CD4-positive, alpha-beta memory T cell (primary cell): ENCODE measurements at regions of chr17 and their contacts with region 1.

Region 1: DNA sequence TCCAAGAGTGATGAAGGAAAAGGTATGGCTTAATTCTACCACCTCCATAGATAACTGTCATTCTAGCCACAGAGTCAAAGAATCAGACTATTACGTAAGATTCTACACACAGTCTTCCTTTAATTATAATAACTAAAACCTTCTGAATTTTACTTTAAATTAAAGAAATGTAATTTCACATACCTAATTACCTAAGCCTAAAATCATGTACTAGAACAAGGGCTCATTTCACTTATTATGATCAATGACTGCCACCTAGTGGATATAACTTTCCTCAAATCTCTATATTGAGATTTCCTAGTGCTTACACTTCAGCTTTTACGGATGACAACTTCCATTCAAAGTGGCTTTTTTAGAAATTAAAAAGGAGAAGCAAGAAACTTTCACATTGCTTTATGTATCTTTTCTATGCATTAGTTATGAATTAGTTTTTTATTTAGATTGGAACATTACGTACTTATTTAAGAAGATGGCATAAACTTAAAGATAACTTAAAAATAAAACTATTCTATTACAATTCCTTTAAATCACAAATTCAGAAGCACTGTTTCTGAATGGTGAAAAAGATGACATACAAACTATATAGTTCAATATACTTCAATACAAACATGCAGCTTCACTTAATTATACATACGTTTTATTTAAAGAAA is 18.2 kb upstream of the ABCA10 start:
- DNase-seq: peak in 3 of 5 donors; percentile 17 to 32 (median 28)
- H3K4me3 ChIP-seq: no peak overlapping the region
- H3K4me3 Mint-ChIP-seq: no peak overlapping the region
- H3K27ac ChIP-seq: no peak overlapping the region
- H3K27ac Mint-ChIP-seq: no peak overlapping the region
- H3K4me1 ChIP-seq: no peaks in the 10 kb centered on the region
- H3K4me1 Mint-ChIP-seq: no peaks in the 10 kb centered on the region
- H3K27me3 ChIP-seq: no peaks in the 10 kb centered on the region
- H3K27me3 Mint-ChIP-seq: no peaks in the 10 kb centered on the region

Region 2: DNA sequence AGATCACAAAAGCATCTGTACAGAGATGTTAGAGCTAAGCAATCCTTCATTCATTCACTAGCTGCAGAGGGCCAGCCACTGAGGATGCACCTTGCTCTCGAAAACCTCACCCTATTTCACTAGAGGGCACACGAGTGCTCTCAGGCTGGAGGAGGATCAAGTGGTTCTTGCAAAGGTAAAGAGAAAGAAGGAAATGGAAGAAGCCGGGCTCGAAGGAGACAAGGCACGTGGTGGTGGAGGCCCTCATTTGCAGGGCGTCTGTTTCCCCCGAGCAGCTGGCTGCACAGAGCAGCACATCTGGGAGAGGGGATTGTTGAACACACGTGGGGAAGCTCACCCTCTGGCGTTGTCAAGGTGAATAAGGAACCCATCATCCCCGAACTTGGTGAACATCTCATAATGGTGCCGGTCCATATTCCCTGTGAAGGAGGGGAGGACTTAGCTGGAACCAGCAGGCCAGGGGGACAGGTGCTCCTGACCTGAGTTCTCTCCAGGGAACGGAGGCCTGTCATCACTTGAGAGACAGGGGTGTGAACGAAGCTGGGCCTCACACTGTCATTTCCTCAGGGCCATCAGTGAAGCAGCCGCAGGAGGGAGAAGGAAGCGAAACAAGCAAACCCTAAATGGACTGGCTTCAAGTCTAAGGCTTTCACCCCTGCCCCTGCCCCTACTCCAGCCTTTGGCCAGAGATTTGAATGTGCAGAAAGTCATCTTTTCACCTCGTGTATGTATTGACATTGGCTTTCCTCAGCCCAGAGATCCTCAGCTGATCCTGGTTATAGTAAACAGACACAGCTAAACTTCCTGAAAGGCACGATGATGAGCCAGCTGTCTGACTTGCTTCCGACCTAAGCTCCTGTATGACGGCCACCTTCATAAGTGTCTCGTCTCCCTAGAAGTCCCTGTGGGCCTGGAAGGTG is 707.0 kb before region 1 on chr17:
- CTCF ChIA-PET with region 1: no interaction called
- POLR2A ChIA-PET with region 1: no interaction called
- intact Hi-C with region 1: loop called (anchors 10 kb)
- DNase-seq: no peak
- H3K4me3 ChIP-seq: no peak overlapping the region
- H3K4me3 Mint-ChIP-seq: no peak overlapping the region
- H3K27ac ChIP-seq: no peak overlapping the region
- H3K27ac Mint-ChIP-seq: peak overlapping the region in 1 of 7 donors; percentile 14
- H3K4me1 ChIP-seq: no peaks in the 10 kb centered on the region
- H3K4me1 Mint-ChIP-seq: no peaks in the 10 kb centered on the region
- H3K27me3 ChIP-seq: no peaks in the 10 kb centered on the region
- H3K27me3 Mint-ChIP-seq: no peaks in the 10 kb centered on the region

Region 3: GRCh38 chr17:68771867-68772515 is 474.9 kb before region 1 on chr17:
- CTCF ChIA-PET with region 1: interaction called, 37 read pairs
- POLR2A ChIA-PET with region 1: no interaction called
- intact Hi-C with region 1: no loop called
- DNase-seq: peak in 2 of 5 donors; percentile 3 to 4
- H3K4me3 ChIP-seq: no peak overlapping the region
- H3K4me3 Mint-ChIP-seq: peak overlapping the region in 5 of 8 donors; percentile 19 to 71 (median 43)
- H3K27ac ChIP-seq: no peak overlapping the region
- H3K27ac Mint-ChIP-seq: no peak overlapping the region
- H3K4me1 ChIP-seq: no peaks in the 10 kb centered on the region
- H3K4me1 Mint-ChIP-seq: peaks cover 0 to 3% (median 0%) of the 10 kb centered on the region in 4 donors
- H3K27me3 ChIP-seq: no peaks in the 10 kb centered on the region
- H3K27me3 Mint-ChIP-seq: peaks cover 3 to 4% of the 10 kb centered on the region in 2 donors

Region 4: GRCh38 chr17:68777243-68777855 is 469.5 kb before region 1 on chr17:
- CTCF ChIA-PET with region 1: interaction called, 37 read pairs
- POLR2A ChIA-PET with region 1: no interaction called
- intact Hi-C with region 1: no loop called
- DNase-seq: peak in 4 of 5 donors; percentile 13 to 27 (median 24)
- H3K4me3 ChIP-seq: no peak overlapping the region
- H3K4me3 Mint-ChIP-seq: no peak overlapping the region
- H3K27ac ChIP-seq: no peak overlapping the region
- H3K27ac Mint-ChIP-seq: no peak overlapping the region
- H3K4me1 ChIP-seq: no peaks in the 10 kb centered on the region
- H3K4me1 Mint-ChIP-seq: no peaks in the 10 kb centered on the region
- H3K27me3 ChIP-seq: no peaks in the 10 kb centered on the region
- H3K27me3 Mint-ChIP-seq: peaks cover 4 to 13% of the 10 kb centered on the region in 2 donors

Region 5: GRCh38 chr17:69198238-69198637 is 48.6 kb before region 1 on chr17:
- CTCF ChIA-PET with region 1: no interaction called
- POLR2A ChIA-PET with region 1: no interaction called
- intact Hi-C with region 1: no loop called
- DNase-seq: no peak
- H3K4me3 ChIP-seq: no peak overlapping the region
- H3K4me3 Mint-ChIP-seq: no peak overlapping the region
- H3K27ac ChIP-seq: no peak overlapping the region
- H3K27ac Mint-ChIP-seq: no peak overlapping the region
- H3K4me1 ChIP-seq: no peaks in the 10 kb centered on the region
- H3K4me1 Mint-ChIP-seq: no peaks in the 10 kb centered on the region
- H3K27me3 ChIP-seq: no peaks in the 10 kb centered on the region
- H3K27me3 Mint-ChIP-seq: no peaks in the 10 kb centered on the region

Region 6: DNA sequence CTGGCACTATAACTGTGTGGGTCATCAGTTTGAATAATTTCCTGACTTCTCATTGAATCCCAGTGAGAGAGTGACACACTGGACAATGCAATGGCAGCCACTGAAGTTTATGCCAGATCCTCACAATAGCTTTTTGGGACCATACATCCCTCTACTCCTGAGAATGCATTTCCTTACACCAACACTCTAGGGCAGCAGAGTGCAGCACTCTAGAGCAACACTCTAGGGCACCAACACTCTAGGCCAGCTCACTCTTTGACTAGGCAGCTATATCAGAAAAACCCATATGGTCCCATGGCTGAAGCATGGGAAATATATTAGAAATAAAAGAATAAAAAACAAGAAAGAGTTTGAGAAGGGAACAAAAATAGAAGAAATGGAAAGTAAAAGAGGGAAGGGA is 476.9 kb after region 1 on chr17:
- CTCF ChIA-PET with region 1: no interaction called
- POLR2A ChIA-PET with region 1: no interaction called
- intact Hi-C with region 1: no loop called
- DNase-seq: no peak
- H3K4me3 ChIP-seq: no peak overlapping the region
- H3K4me3 Mint-ChIP-seq: no peak overlapping the region
- H3K27ac ChIP-seq: no peak overlapping the region
- H3K27ac Mint-ChIP-seq: no peak overlapping the region
- H3K4me1 ChIP-seq: no peaks in the 10 kb centered on the region
- H3K4me1 Mint-ChIP-seq: no peaks in the 10 kb centered on the region
- H3K27me3 ChIP-seq: no peaks in the 10 kb centered on the region
- H3K27me3 Mint-ChIP-seq: peaks cover 0 to 3% of the 10 kb centered on the region in 2 donors